HAP-1 (cell line): ENCODE measurements at regions of chr17 and their contacts with region 1.

Region 1: GRCh38 chr17:36601303-36602029 is at the start of gene MRM1:
- DNase-seq: peak; percentile 91 to 98
- H3K4me3 ChIP-seq: peak within 1 kb of the TSS; percentile 89
- H3K4me1 ChIP-seq: peaks cover 18% of the 10 kb centered on the region
- H3K27me3 ChIP-seq: no peaks in the 10 kb centered on the region

Region 2: GRCh38 chr17:37194208-37194607 is 592.7 kb after region 1 on chr17:
- in situ Hi-C with region 1: no loop called
- DNase-seq: no peak
- H3K4me3 ChIP-seq: no peak overlapping the region
- H3K4me1 ChIP-seq: 0 out of 2 replicates have a peak, but pooled peaks cover 5% of the 10 kb centered on the region
- H3K27me3 ChIP-seq: no peaks in the 10 kb centered on the region

Region 3: DNA sequence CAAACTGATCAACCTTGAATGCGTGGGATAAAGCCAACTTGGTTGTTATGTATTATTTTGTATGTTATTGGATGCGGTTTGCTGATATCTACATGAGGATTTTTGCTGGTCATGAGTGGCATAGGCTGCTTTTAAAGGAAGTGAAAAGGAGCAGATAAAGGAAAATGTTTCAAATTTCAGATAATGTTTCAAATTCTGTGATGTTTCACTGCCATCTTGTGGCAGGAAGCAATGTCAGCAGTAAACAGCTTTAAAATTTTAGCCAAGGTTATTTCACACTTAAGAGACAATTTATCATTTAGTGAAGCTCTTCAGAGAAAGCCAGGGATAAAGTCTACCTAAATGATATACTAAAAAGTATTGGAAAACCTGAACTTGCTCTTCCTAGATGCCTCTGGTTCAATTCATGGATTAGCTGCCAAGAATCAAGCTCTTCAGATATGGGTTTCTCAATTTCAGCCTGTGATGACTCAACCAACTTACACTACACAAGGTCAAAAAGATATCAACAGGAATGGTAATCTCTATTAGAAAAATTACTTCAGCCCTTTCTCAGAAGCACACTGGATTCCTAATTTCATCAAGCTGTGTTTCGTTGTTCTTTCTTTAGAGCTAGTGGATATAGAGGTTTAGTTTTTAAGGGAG is 638.3 kb after region 1 on chr17:
- in situ Hi-C with region 1: loop called (anchors 25 kb)
- DNase-seq: peak in 1 of 2 experiments; percentile 39
- H3K4me3 ChIP-seq: no peak overlapping the region
- H3K4me1 ChIP-seq: peaks cover 5% of the 10 kb centered on the region
- H3K27me3 ChIP-seq: no peaks in the 10 kb centered on the region

Region 4: GRCh38 chr17:37358830-37359681 is 757.6 kb after region 1 on chr17:
- in situ Hi-C with region 1: loop called (anchors 25 kb)
- DNase-seq: peak; percentile 92 to 96
- H3K4me3 ChIP-seq: peak overlapping the region; percentile 86
- H3K4me1 ChIP-seq: peaks cover 21% of the 10 kb centered on the region
- H3K27me3 ChIP-seq: no peaks in the 10 kb centered on the region